AG04449 (cell line): ENCODE measurements at regions of chr11 and their contacts with region 1.

Region 1: DNA sequence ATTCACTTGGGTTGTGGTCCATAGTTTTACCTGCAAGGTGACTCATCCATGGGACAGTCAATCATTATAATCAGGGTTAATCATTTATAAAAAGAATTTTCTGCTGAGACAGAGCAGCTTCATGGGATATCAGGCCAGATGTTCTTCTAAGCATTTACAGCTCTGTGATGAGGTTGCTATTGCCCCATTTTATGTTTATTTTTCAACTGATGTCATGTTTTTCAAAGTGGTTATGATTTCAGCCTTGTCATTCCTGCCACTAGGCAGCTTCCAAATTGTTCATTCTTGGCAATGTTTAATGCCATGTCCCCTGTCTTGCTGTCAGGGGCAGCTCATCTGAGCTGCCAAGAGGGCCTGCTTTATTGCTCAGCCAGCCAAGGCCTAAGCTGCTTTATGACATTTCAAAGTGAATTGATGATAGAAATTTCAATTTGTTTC is 35.9 kb upstream of the ZBED5 start:
- DNase-seq: no peak
- H3K4me3 ChIP-seq: no peak overlapping the region
- CTCF ChIP-seq: peak; percentile 29

Region 2: DNA sequence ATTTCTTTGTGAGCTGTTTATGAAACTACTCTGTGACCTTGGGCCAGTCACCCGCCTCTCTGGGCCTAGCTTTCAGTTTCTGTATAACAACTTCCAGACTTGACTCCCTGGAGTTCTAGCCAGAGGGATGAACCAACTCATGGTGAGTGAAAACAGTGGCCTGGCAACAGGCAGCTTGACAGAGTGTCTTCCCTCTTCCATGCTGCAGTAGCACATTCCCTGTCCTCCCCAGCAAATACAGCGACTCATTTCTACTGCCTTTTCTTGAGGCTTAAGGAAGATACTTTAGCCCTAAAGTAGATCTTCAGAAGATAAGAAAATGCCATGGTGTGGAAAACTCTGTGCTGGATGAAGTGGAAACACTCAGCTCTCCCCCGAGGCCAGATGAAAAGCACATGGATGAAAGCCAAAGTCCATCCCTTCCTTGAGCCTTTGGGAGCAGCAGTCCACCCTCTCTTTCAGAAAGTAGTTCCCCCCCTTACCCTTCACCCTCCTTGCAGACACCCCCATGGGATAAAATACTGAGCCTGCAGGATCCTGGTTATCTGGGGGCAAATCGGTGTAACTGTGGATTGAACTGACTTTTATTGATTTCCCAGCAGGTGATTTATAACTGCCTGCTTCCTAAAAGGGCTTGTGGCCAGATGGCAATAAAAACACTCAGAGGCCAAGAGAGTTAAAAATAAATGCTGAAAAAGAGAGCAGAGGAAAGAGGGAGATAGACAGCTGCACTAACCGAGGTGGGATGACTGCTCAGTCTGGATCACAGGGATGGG is 224.3 kb before region 1 on chr11:
- CTCF ChIA-PET with region 1: no interaction called
- POLR2A ChIA-PET with region 1: no interaction called
- DNase-seq: no peak
- H3K4me3 ChIP-seq: no peak overlapping the region
- CTCF ChIP-seq: no peak

Region 3: GRCh38 chr11:10906513-10906912 is 12.8 kb after region 1 on chr11:
- CTCF ChIA-PET with region 1: interaction called, 17 read pairs
- POLR2A ChIA-PET with region 1: interaction called, 3 read pairs
- DNase-seq: no peak
- H3K4me3 ChIP-seq: no peak overlapping the region
- CTCF ChIP-seq: peak; percentile 15

Region 4: DNA sequence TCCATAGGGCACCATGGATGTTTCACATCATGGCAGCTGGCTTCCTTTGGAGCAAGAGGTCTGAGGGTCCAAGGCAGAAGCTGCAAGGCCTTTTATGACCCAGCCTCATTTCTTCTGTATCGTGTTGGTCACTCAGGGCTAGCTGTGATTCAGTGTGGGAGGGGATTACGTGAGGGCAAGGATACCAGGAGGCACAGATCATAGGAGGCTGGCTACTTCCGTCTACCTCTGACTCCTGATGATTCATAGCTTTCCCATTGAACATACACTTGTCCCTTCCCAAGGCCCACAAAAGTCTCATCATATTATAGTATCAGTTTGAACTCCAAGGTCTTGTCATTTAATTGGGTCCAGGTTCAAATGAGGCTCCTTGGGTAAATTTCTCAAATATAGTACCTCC is 99.5 kb after region 1 on chr11:
- CTCF ChIA-PET with region 1: no interaction called
- POLR2A ChIA-PET with region 1: no interaction called
- DNase-seq: no peak
- H3K4me3 ChIP-seq: no peak overlapping the region
- CTCF ChIP-seq: no peak

Region 5: DNA sequence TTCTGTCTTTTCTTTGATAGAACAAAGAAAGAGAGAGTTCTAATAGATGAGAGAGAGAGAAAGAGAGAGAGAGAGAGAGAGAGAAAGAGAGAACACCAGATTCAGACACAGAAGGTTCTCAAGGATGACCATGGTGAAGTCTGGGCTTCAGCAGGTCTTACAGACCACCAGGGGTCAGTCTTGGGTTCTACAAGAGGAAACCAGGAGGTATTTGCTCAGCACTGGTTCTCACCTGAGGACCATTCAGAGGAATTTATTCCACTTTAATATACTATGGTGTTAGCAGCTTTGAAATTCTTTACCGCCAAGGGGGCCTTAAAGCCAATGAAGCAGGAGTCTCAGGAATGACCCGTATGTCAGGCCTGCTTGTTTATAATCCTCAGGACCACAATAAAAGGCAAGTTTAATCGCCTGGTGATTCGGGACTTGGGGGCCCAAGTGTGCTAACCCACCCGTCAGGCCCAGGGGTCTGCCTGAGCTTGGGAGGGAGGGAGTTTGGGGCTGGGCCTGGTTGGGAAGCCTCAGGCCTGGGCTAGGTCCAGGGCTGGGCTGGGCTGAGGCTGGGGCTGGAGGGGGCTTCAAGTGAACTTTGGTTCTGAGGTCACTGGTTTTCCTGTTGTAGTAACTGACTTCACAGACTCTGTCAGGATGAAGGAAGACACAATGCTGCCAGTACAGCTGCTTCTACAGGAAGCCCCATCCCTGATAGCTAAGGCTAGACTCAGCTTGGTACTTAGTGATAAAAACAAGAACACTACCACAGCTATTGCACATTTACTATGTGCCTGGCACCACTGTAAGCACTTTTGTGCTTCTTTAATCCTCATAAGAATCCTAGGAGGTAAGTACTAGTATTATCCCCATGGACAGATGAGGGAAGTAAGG is 143.4 kb after region 1 on chr11:
- CTCF ChIA-PET with region 1: no interaction called
- POLR2A ChIA-PET with region 1: no interaction called
- DNase-seq: no peak
- H3K4me3 ChIP-seq: no peak overlapping the region
- CTCF ChIP-seq: peak; percentile 58